ENCODE measurements at regions of chr14 and their contacts with region 1.

Region 1: GRCh38 chr14:67599698-67600561 is at the start of gene PIGH:
- DNase-seq: peak; percentile 92 to 96 (median 94)
- ATAC-seq: peak; percentile 94 to 96
- H3K4me3 Mint-ChIP-seq: peak within 1 kb of the TSS; percentile 88 to 99 (median 97)
- H3K27ac Mint-ChIP-seq: peak within 1 kb of the TSS; percentile 91 to 99 (median 98)
- H3K4me1 Mint-ChIP-seq: peaks cover 24 to 62% (median 47%) of the 10 kb centered on the region in 4 donors
- H3K27me3 Mint-ChIP-seq: no peaks in the 10 kb centered on the region
- polyA plus RNA-seq, gene PIGH: 24.6 to 44.5 (median 35.3) TPM

Region 2: GRCh38 chr14:67582061-67582460 is 17.9 kb before region 1 on chr14:
- POLR2A ChIA-PET with region 1: no interaction called
- DNase-seq: no peak
- ATAC-seq: no peak
- H3K4me3 Mint-ChIP-seq: no peak overlapping the region
- H3K27ac Mint-ChIP-seq: no peak overlapping the region
- H3K4me1 Mint-ChIP-seq: no peaks in the 10 kb centered on the region
- H3K27me3 Mint-ChIP-seq: no peaks in the 10 kb centered on the region

Region 3: DNA sequence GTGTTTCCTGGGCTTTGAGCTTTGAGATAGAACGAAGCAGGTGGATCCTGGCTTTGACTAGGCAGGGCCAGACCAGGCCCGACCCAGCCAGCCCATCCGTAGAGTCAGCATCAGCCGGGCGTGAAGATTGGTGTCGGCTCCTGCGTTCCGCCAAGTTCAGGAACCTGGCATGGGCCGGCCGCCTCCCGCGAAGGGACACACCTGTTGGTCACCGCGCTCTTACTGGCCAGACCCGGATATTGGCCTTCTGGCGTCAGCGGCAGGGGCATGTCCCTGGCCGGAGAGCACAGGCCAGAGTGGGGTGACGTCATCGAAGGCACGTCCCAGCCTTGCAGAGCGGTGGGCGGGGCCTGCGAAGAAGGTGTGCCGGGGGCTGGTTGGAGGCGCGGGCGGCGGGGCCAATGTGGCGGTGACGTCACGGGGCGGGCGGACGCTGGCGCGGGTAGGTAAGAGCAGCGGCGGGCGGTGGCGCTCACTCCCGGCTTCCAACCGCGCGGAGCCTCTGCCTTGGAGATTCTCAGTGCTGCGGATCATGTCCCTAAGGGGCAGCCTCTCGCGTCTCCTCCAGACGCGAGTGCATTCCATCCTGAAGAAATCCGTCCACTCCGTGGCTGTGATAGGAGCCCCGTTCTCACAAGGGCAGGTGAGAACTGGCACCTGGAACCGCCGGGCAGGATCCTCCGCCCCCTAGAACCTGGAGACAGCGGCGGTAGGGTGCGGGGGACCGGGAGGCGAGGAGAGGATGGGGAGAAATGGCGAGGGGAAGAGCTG is 19.7 kb after region 1 on chr14 and contains the start of gene ARG2:
- POLR2A ChIA-PET with region 1: interaction called, 27 read pairs
- DNase-seq: peak; percentile 93 to 98 (median 96)
- ATAC-seq: peak; percentile 87 to 90
- H3K4me3 Mint-ChIP-seq: peak within 1 kb of the TSS; percentile 82 to 95 (median 91)
- H3K27ac Mint-ChIP-seq: peak within 1 kb of the TSS; percentile 69 to 99 (median 96)
- H3K4me1 Mint-ChIP-seq: peaks cover 7 to 37% (median 30%) of the 10 kb centered on the region in 4 donors
- H3K27me3 Mint-ChIP-seq: peaks cover 0 to 1% (median 0%) of the 10 kb centered on the region in 5 donors
- polyA plus RNA-seq, gene ARG2: 0.32 to 0.88 TPM in 2 of 3 donors, not detected in the other

Region 4: DNA sequence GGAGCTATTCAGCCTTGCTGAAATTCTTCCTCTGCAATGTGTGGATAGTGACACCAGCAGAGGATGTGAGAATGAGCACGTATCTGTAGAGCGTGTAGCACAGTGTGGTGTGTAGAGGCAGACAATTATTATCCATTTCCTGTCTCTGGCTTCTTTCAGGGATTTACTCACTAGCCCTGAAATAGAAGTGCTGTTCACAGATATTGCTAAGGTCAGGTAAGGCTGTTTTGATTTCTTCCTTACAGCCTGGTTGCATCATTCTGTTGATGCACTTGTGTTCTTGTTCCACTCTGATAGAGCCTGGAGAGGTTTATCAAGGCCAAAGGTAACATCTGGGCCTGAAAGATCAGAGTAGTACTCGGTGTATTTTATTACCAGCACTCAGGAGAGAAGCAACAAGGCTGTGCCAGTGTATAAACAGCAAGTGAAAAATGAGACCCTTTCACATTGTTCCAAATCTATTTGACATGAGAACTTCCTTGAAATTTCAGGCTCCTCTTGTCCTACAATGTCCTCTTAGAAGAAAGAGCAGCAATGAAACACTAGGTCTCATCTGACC is 36.5 kb after region 1 on chr14:
- POLR2A ChIA-PET with region 1: no interaction called
- DNase-seq: no peak
- ATAC-seq: no peak
- H3K4me3 Mint-ChIP-seq: no peak overlapping the region
- H3K27ac Mint-ChIP-seq: no peak overlapping the region
- H3K4me1 Mint-ChIP-seq: no peaks in the 10 kb centered on the region
- H3K27me3 Mint-ChIP-seq: no peaks in the 10 kb centered on the region

Region 5: GRCh38 chr14:67674481-67675169 is 74.7 kb after region 1 on chr14 and contains the start of gene VTI1B:
- POLR2A ChIA-PET with region 1: interaction called, 15 read pairs
- DNase-seq: peak; percentile 69 to 92 (median 80)
- ATAC-seq: peak; percentile 91 to 92
- H3K4me3 Mint-ChIP-seq: peak within 1 kb of the TSS; percentile 87 to 96 (median 91)
- H3K27ac Mint-ChIP-seq: peak within 1 kb of the TSS; percentile 92 to 96 (median 93)
- H3K4me1 Mint-ChIP-seq: peaks cover 16 to 50% (median 41%) of the 10 kb centered on the region in 4 donors
- H3K27me3 Mint-ChIP-seq: no peaks in the 10 kb centered on the region
- polyA plus RNA-seq, gene VTI1B: 64.4 to 87.9 (median 83.1) TPM

Region 6: DNA sequence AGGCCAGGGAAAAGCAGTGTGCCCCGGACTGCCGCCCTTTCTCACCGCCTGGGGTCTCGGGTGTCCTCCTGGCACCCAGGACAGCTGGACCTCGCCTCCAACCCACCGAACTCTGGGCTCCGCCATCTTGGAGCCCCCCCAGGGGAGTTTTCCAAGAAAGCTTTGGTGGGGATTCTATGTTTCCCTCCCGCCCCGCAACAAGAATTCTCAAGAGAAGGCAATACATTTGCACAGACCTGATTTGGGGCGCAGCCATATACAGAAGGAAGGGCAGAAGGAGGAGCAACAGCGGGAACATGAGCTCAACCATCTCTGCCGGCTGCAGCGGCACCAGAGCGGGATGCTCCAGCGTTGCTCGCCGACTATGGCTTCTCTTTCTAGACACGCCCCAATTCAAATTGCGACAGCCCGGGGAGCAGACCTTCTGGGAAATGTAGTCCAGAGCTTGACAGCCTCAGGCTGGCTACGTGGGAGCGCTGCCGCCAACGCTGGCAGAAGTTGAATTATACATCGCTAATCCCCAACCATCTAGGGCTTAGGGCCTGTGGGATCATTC is 95.5 kb after region 1 on chr14 and contains the start of gene RDH11:
- POLR2A ChIA-PET with region 1: interaction called, 10 read pairs
- DNase-seq: peak; percentile 60 to 91 (median 80)
- ATAC-seq: peak; percentile 95 to 96
- H3K4me3 Mint-ChIP-seq: peak within 1 kb of the TSS; percentile 84 to 96 (median 91)
- H3K27ac Mint-ChIP-seq: peak within 1 kb of the TSS; percentile 61 to 93 (median 90)
- H3K4me1 Mint-ChIP-seq: peaks cover 18 to 25% (median 22%) of the 10 kb centered on the region in 4 donors
- H3K27me3 Mint-ChIP-seq: no peaks in the 10 kb centered on the region
- polyA plus RNA-seq, gene RDH11: 74.7 to 87.6 (median 79.3) TPM